MCF 10A (cell line): ENCODE measurements at regions of chr16 and their contacts with region 1.

Region 1: GRCh38 chr16:54031107-54031760 is 255.4 kb downstream of the IRX3 start:
- DNase-seq: peak; percentile 46
- H3K4me3 Mint-ChIP-seq: no peak overlapping the region
- H3K27ac Mint-ChIP-seq: peak overlapping the region; percentile 57
- H3K4me1 Mint-ChIP-seq: peaks cover 32% of the 10 kb centered on the region
- H3K27me3 Mint-ChIP-seq: no peaks in the 10 kb centered on the region
- CTCF ChIP-seq: no peak

Region 2: GRCh38 chr16:54193665-54194333 is 162.6 kb after region 1 on chr16:
- CTCF ChIA-PET with region 1: no interaction called
- POLR2A ChIA-PET with region 1: no interaction called
- intact Hi-C with region 1: loop called (anchors 2 kb)
- DNase-seq: peak; percentile 86
- H3K4me3 Mint-ChIP-seq: peak overlapping the region; percentile 55
- H3K27ac Mint-ChIP-seq: peak overlapping the region; percentile 90
- H3K4me1 Mint-ChIP-seq: peaks cover 5% of the 10 kb centered on the region
- H3K27me3 Mint-ChIP-seq: no peaks in the 10 kb centered on the region
- CTCF ChIP-seq: peak; percentile 83